Ascending aorta (tissue), 2 donors: ENCODE measurements at regions of chr13 and their contacts with region 1.

Region 1: DNA sequence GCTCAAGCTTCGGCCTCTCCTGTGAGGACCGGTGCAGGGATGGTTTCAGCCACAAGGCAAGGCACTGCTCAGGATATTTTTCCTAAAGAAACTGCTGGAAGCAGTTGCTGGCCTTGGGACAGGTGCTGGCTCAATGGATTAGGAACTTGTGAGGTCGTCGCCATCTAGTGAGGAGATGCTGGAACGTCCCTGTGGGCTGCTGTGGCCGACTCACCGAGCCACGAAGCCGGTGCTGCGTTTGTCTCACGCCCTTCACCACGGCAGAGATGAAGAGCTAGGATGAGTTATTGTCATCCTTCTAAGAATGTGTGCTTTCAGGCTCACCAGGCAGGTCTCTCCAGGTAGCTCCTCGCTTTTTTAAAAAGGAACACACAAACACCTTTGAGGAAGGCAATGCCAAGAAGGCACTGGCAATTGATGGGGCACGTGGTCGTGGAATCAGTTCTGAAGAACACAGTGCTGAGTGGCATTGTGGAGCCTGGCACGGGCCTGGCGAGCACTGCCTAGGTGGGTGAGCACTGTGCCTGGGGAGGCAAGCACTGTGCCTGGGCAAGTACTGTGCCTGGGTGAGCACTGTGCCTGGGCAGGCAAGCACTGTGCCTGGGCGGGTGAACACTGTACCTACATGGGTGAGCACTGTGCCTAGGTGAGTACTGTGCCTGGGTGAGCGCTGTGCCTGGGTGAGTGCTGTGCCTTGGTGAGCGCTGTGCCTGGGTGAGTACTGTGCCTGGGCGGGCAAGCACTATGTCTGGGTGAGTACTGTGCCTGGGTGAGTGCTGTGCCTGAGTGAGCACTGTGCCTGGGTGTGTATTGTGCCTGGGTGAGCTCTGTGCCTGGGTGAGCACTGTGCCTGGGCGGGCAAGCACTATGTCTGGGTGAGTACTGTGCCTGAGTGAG is 140.4 kb downstream of the TEX29 start:
- DNase-seq: no peak
- H3K4me3 ChIP-seq: no peak overlapping the region
- H3K27ac ChIP-seq: no peak overlapping the region
- H3K4me1 ChIP-seq: no peaks in the 10 kb centered on the region
- H3K27me3 ChIP-seq: no peaks in the 10 kb centered on the region
- CTCF ChIP-seq: peak in 1 of 3 experiments; percentile 50

Region 2: GRCh38 chr13:111049802-111050538 is 410.8 kb before region 1 on chr13:
- intact Hi-C with region 1: no loop called
- DNase-seq: no peak
- H3K4me3 ChIP-seq: no peak overlapping the region
- H3K27ac ChIP-seq: no peak overlapping the region
- H3K4me1 ChIP-seq: peaks cover 0 to 6% of the 10 kb centered on the region in 2 donors
- H3K27me3 ChIP-seq: no peaks in the 10 kb centered on the region
- CTCF ChIP-seq: peak; percentile 14 to 61 (median 40)

Region 3: DNA sequence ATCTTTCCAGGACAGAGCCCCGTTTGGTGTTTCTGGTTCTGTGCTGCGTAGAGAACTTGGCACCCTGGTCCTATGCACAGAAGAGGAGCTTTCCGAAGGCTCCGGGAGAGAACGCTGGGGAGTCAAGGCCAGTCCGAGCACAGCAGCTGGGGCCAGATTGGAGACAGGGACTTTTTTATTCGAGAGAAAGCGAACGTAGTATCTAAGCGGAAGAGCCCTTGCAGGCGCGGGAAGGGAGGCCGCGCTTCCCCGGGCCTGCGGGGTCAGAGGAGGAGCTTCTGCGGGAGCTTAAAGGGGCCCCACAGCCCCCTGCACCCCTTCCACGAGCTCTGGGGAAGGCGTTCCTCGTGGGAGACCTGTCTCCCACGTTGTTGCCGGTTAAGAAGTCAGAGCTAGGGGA is 394.3 kb before region 1 on chr13:
- intact Hi-C with region 1: loop called (anchors 5 kb)
- DNase-seq: no peak
- H3K4me3 ChIP-seq: no peak overlapping the region
- H3K27ac ChIP-seq: no peak overlapping the region
- H3K4me1 ChIP-seq: no peaks in the 10 kb centered on the region
- H3K27me3 ChIP-seq: no peaks in the 10 kb centered on the region
- CTCF ChIP-seq: no peak